ENCODE measurements at regions of chr2 and their contacts with region 1.

Region 1: DNA sequence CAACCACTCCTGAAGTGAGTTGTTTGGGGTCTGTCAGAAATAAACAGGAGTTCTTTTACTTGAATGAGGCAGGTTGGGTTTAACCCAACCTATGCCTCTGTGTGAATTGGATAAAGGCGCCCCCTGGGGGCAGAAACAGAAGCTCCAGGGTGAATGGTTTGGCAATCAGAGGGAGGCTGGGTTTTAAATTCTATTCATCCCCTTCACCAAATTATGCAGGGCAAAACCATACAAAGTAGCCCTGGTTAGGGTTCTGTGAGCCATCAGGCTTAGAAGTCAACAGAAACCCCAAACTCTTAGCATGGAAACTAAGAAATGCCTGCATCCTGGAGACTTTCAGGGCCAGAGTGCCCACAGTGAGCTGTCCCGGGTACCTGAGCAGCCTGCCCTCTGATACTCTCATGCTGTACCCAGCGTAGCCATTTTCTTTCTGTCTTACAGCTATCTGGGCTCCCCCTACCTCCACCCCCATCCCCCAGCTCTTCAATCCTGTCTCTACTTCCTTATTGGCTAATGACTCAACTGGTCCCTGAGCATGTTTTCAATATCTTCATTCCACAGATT is 241.5 kb downstream of the ICOS start:
- DNase-seq: peak; percentile 85
- ATAC-seq: peak; percentile 95
- H3K4me3 Mint-ChIP-seq: no peak overlapping the region
- H3K27ac Mint-ChIP-seq: no peak overlapping the region
- H3K4me1 Mint-ChIP-seq: peaks cover 8% of the 10 kb centered on the region
- H3K27me3 Mint-ChIP-seq: peaks cover 7% of the 10 kb centered on the region

Region 2: GRCh38 chr2:204024503-204024902 is 153.6 kb before region 1 on chr2:
- CTCF ChIA-PET with region 1: interaction called, 15 read pairs
- POLR2A ChIA-PET with region 1: no interaction called
- intact Hi-C with region 1: loop called (anchors 2 kb)
- DNase-seq: peak; percentile 50
- ATAC-seq: no peak
- H3K4me3 Mint-ChIP-seq: no peak overlapping the region
- H3K27ac Mint-ChIP-seq: no peak overlapping the region
- H3K4me1 Mint-ChIP-seq: peaks cover 52% of the 10 kb centered on the region
- H3K27me3 Mint-ChIP-seq: no peaks in the 10 kb centered on the region

Region 3: DNA sequence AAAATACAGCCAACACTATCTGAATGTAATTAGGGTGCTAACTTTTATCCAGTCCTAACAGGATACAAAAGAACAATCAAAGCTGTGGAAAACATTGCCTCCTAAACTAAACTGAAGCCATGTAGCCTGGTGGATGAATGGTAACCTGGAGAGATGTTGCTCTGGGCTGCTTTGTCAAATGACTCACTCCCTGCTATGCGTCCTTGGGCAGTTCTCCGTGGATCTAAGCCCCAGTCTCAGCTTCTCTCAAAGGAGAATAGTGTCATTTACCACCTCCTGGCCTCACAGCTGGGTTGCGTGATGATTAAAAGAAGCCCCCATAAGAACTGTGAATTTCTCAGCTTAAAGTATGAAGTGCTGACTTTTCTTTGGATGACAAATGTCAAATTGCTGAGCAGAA is 37.8 kb before region 1 on chr2:
- CTCF ChIA-PET with region 1: interaction called, 37 read pairs
- POLR2A ChIA-PET with region 1: no interaction called
- intact Hi-C with region 1: loop called (anchors 1 to 2 kb)
- DNase-seq: no peak
- ATAC-seq: no peak
- H3K4me3 Mint-ChIP-seq: no peak overlapping the region
- H3K27ac Mint-ChIP-seq: no peak overlapping the region
- H3K4me1 Mint-ChIP-seq: no peaks in the 10 kb centered on the region
- H3K27me3 Mint-ChIP-seq: peaks cover 4% of the 10 kb centered on the region

Region 4: GRCh38 chr2:204152616-204153015 is 25.4 kb before region 1 on chr2:
- CTCF ChIA-PET with region 1: interaction called, 28 read pairs
- POLR2A ChIA-PET with region 1: no interaction called
- intact Hi-C with region 1: no loop called
- DNase-seq: no peak
- ATAC-seq: no peak
- H3K4me3 Mint-ChIP-seq: no peak overlapping the region
- H3K27ac Mint-ChIP-seq: no peak overlapping the region
- H3K4me1 Mint-ChIP-seq: no peaks in the 10 kb centered on the region
- H3K27me3 Mint-ChIP-seq: peaks cover 11% of the 10 kb centered on the region

Region 5: GRCh38 chr2:204166961-204167360 is 11.1 kb before region 1 on chr2:
- CTCF ChIA-PET with region 1: interaction called, 26 read pairs
- POLR2A ChIA-PET with region 1: interaction called, 3 read pairs
- intact Hi-C with region 1: no loop called
- DNase-seq: no peak
- ATAC-seq: no peak
- H3K4me3 Mint-ChIP-seq: no peak overlapping the region
- H3K27ac Mint-ChIP-seq: no peak overlapping the region
- H3K4me1 Mint-ChIP-seq: no peaks in the 10 kb centered on the region
- H3K27me3 Mint-ChIP-seq: peaks cover under 1% of the 10 kb centered on the region

Region 6: GRCh38 chr2:204695506-204695905 is 517.4 kb after region 1 on chr2:
- CTCF ChIA-PET with region 1: no interaction called
- POLR2A ChIA-PET with region 1: no interaction called
- intact Hi-C with region 1: no loop called
- DNase-seq: no peak
- ATAC-seq: no peak
- H3K4me3 Mint-ChIP-seq: no peak overlapping the region
- H3K27ac Mint-ChIP-seq: no peak overlapping the region
- H3K4me1 Mint-ChIP-seq: peaks cover 10% of the 10 kb centered on the region
- H3K27me3 Mint-ChIP-seq: no peaks in the 10 kb centered on the region